ENCODE measurements at regions of chr4 and their contacts with region 1.

Region 1: DNA sequence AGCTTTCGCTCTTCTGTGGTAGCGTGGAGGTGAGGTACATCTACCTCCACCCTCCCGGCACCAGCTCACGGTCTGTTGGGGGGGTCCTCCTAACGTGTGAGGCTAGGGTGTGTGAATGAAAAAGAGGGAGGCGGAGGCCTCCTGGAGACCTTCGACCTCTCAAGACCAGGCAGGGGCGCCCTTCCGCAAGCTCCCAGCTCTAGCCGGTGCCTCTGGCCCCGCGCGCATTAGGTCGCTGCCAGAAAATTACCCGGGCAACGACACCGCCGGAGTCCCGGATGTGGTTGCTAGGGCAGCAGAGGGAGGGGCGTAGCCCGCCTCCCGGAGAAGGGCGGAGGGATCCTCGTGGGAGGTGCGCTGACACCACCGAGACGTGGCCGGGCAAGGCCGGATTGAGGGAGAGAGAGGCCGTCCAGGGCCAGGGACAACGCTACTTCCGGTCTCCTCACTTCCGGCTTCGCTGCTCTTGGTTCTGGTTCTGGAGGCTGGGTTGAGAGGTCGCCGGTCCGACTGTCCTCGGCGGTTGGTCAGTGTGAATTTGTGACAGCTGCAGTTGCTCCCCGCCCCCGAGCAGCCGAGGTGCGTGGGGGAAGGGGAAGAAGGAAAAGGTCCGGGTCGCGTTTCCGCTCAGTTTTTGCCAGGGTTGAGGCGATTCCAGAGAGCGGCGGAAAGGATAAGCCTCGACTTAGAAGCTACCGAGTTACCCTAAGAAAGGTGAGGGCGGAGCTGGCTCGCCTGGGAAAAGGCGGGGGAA is at the starts of genes ARFIP1 and TIGD4:
- DNase-seq: peak; percentile 86 to 97 (median 93)
- ATAC-seq: peak; percentile 94
- H3K4me3 ChIP-seq: peak within 1 kb of the TSS; percentile 97
- H3K4me3 Mint-ChIP-seq: peak within 1 kb of the TSS; percentile 92 to 100 (median 96)
- H3K27ac ChIP-seq: peak within 1 kb of the TSS; percentile 80
- H3K27ac Mint-ChIP-seq: peak within 1 kb of the TSS; percentile 90 to 99 (median 95)
- H3K4me1 ChIP-seq: peaks cover 13 to 16% of the 10 kb centered on the region in 2 donors
- H3K4me1 Mint-ChIP-seq: peaks cover 33 to 60% (median 44%) of the 10 kb centered on the region in 7 donors
- H3K27me3 ChIP-seq: no peaks in the 10 kb centered on the region
- H3K27me3 Mint-ChIP-seq: peaks cover 0 to 29% (median 6%) of the 10 kb centered on the region in 5 donors
- total RNA-seq, gene ARFIP1: 5.1 to 20.2 (median 15.1) TPM
- total RNA-seq, gene TIGD4: 0.15 to 0.19 TPM in 2 of 5 experiments, not detected in the others

Region 2: GRCh38 chr4:151099229-151099975 is 1680.3 kb before region 1 on chr4 and contains the start of gene RPS3A:
- CTCF ChIA-PET with region 1: interaction called, 3 read pairs
- POLR2A ChIA-PET with region 1: no interaction called
- intact Hi-C with region 1: loop called (anchors 1 kb)
- DNase-seq: peak; percentile 95 to 100 (median 99)
- ATAC-seq: peak; percentile 97
- H3K4me3 ChIP-seq: peak within 1 kb of the TSS; percentile 96
- H3K4me3 Mint-ChIP-seq: peak within 1 kb of the TSS; percentile 89 to 99 (median 96)
- H3K27ac ChIP-seq: peak within 1 kb of the TSS; percentile 89
- H3K27ac Mint-ChIP-seq: peak within 1 kb of the TSS; percentile 97 to 99 (median 98)
- H3K4me1 ChIP-seq: peaks cover 14 to 18% of the 10 kb centered on the region in 2 donors
- H3K4me1 Mint-ChIP-seq: peaks cover 24 to 43% (median 28%) of the 10 kb centered on the region in 7 donors
- H3K27me3 ChIP-seq: no peaks in the 10 kb centered on the region
- H3K27me3 Mint-ChIP-seq: peaks cover 0 to 4% (median 0%) of the 10 kb centered on the region in 5 donors
- total RNA-seq, gene RPS3A: 1,723 to 5,358 (median 3,483) TPM

Region 3: GRCh38 chr4:152454398-152455011 is 325.2 kb before region 1 on chr4:
- CTCF ChIA-PET with region 1: no interaction called
- POLR2A ChIA-PET with region 1: no interaction called
- intact Hi-C with region 1: loop called in 1 of 2 experiments (anchors 5 kb)
- DNase-seq: peak in 2 of 9 donors; percentile 6 to 7
- ATAC-seq: no peak
- H3K4me3 ChIP-seq: no peak overlapping the region
- H3K4me3 Mint-ChIP-seq: no peak overlapping the region
- H3K27ac ChIP-seq: no peak overlapping the region
- H3K27ac Mint-ChIP-seq: no peak overlapping the region
- H3K4me1 ChIP-seq: peaks cover 5 to 9% of the 10 kb centered on the region in 2 donors
- H3K4me1 Mint-ChIP-seq: peaks cover 30 to 53% (median 41%) of the 10 kb centered on the region in 7 donors
- H3K27me3 ChIP-seq: no peaks in the 10 kb centered on the region
- H3K27me3 Mint-ChIP-seq: no peaks in the 10 kb centered on the region

Region 4: DNA sequence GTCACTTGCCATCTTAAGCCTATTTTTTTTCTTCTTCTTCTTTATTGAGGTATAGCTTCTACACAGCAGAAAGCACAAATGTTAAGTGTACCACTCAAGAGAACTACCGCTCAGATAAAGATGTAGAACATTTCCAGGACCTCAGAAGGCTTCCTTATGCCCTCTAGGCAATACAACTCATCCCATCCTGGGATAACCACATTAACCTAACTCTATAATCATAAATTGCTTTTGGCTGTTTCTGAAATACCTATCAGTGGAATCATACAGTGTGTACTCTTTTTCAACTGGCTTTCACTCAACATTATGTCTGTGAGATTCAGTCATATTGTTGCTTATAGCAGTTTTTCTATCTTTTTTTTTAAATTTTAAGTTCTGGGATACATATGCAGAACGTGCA is 51.7 kb after region 1 on chr4:
- CTCF ChIA-PET with region 1: no interaction called
- POLR2A ChIA-PET with region 1: no interaction called
- intact Hi-C with region 1: no loop called
- DNase-seq: no peak
- ATAC-seq: no peak
- H3K4me3 ChIP-seq: no peak overlapping the region
- H3K4me3 Mint-ChIP-seq: no peak overlapping the region
- H3K27ac ChIP-seq: no peak overlapping the region
- H3K27ac Mint-ChIP-seq: no peak overlapping the region
- H3K4me1 ChIP-seq: no peaks in the 10 kb centered on the region
- H3K4me1 Mint-ChIP-seq: peaks cover 0 to 6% (median 0%) of the 10 kb centered on the region in 7 donors
- H3K27me3 ChIP-seq: no peaks in the 10 kb centered on the region
- H3K27me3 Mint-ChIP-seq: no peaks in the 10 kb centered on the region

Region 5: DNA sequence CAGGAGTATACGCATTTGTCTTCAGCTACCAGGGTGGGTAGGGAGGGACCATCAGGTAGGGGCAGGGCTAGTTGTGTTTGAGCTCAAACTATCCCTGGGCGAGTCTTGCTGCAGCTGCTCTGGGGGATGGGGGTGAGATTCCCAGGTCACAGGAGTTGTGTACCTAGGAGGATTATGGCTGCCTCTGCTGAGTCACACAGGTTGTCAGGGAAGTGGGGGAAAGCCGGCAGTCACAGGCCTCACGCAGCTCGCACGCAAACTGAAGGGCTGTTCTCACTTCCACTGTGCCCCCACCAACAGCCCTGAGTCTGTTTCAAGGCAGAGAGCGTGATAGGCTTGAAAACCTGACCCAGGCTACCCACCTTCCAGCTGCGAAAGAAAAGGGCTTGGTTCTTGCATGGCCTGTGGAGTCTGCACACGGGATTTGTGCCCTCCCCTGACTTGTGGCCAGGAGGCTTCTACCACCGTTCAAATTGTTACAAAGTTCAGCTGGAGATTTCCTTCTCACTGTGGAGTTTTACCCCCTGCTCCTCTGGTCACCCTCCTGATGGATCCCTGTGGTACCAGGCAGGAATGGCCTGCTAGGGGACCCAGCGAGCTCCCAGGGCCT is 63.9 kb after region 1 on chr4:
- CTCF ChIA-PET with region 1: no interaction called
- POLR2A ChIA-PET with region 1: no interaction called
- intact Hi-C with region 1: loop called (anchors 1 kb)
- DNase-seq: no peak
- ATAC-seq: no peak
- H3K4me3 ChIP-seq: no peak overlapping the region
- H3K4me3 Mint-ChIP-seq: no peak overlapping the region
- H3K27ac ChIP-seq: no peak overlapping the region
- H3K27ac Mint-ChIP-seq: no peak overlapping the region
- H3K4me1 ChIP-seq: peaks cover 0 to 4% of the 10 kb centered on the region in 2 donors
- H3K4me1 Mint-ChIP-seq: peaks cover 13 to 25% (median 20%) of the 10 kb centered on the region in 7 donors
- H3K27me3 ChIP-seq: no peaks in the 10 kb centered on the region
- H3K27me3 Mint-ChIP-seq: no peaks in the 10 kb centered on the region

Region 6: DNA sequence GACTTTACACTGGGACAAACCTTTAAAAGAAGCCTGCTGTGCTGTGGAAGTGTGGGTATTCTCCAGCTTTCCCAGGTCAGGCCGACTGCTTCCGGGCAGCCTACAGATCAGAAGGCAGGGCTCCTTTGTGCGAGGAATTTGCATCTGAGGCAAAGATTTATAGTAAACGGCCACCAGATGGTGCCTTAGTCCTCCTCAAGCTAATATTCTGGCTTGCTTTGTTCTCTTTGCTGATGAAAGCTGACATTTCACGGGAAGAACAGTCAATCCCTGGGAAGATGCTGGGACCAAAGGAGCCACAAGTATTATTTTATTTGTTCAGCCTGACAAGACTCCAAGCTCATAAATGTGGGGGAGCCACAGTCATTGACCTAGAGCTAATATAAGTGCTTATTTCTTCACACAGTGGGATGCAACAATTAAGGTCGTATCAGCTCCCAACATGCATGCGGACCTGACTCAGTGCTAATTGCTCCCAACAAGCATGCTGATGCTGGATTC is 303.8 kb after region 1 on chr4:
- CTCF ChIA-PET with region 1: interaction called, 3 read pairs
- POLR2A ChIA-PET with region 1: no interaction called
- intact Hi-C with region 1: loop called (anchors 1 to 2 kb)
- DNase-seq: peak in 7 of 9 donors; percentile 44 to 66 (median 57)
- ATAC-seq: peak; percentile 61
- H3K4me3 ChIP-seq: no peak overlapping the region
- H3K4me3 Mint-ChIP-seq: peak overlapping the region in 3 of 10 donors; percentile 16 to 71 (median 36)
- H3K27ac ChIP-seq: no peak overlapping the region
- H3K27ac Mint-ChIP-seq: peak overlapping the region in 6 of 9 donors; percentile 45 to 83 (median 60)
- H3K4me1 ChIP-seq: peaks cover 5 to 33% of the 10 kb centered on the region in 2 donors
- H3K4me1 Mint-ChIP-seq: peaks cover 19 to 59% (median 49%) of the 10 kb centered on the region in 7 donors
- H3K27me3 ChIP-seq: no peaks in the 10 kb centered on the region
- H3K27me3 Mint-ChIP-seq: peaks cover 0 to 32% (median 0%) of the 10 kb centered on the region in 5 donors

Region 7: GRCh38 chr4:153221783-153222706 is 442.4 kb after region 1 on chr4:
- CTCF ChIA-PET with region 1: no interaction called
- POLR2A ChIA-PET with region 1: no interaction called
- intact Hi-C with region 1: loop called in 1 of 2 experiments (anchors 10 kb)
- DNase-seq: peak in 8 of 9 donors; percentile 19 to 42 (median 31)
- ATAC-seq: peak; percentile 65
- H3K4me3 ChIP-seq: peak overlapping the region; percentile 62
- H3K4me3 Mint-ChIP-seq: peak overlapping the region; percentile 86 to 96 (median 92)
- H3K27ac ChIP-seq: peak overlapping the region; percentile 60
- H3K27ac Mint-ChIP-seq: peak overlapping the region in 8 of 9 donors; percentile 42 to 88 (median 76)
- H3K4me1 ChIP-seq: peaks cover 0 to 24% of the 10 kb centered on the region in 2 donors
- H3K4me1 Mint-ChIP-seq: peaks cover 23 to 48% (median 42%) of the 10 kb centered on the region in 7 donors
- H3K27me3 ChIP-seq: no peaks in the 10 kb centered on the region
- H3K27me3 Mint-ChIP-seq: peaks cover 0 to 66% (median 3%) of the 10 kb centered on the region in 5 donors

Region 8: DNA sequence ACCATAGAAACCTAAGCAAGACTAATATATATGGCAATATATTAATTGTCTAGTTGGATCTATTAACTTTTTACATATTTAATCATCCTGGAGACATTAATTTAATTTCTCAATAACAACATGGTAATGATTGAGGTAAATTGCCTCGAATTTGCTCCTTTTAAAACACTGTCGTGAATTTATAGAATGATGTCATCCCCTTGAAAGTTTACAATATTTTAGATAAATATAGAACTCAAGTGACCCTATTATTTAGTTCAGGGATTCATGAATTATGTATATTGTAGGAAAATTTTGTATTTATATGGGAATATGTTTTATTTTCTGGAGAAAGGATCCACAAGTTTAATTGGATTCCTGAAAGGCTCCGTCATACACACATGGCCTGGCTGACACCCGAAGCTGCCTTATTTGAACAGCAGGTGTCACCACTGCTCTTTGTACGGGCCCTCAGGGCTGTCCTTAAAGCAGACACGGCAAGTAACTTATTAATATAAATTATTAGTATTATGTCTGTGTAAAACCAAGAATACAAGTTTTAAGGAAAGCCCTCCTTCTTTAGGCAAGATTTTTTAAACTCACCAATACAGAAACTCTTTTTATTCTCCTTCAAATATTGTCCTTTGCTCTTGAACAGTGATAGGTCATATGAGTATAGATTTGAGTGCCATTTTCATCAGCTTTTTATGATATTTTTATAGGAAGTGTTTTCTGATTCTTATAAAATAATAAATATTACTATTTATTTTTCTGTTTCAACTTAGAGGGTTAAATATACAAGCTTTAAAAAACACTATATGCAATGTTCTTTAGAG is 1772.4 kb after region 1 on chr4:
- CTCF ChIA-PET with region 1: no interaction called
- POLR2A ChIA-PET with region 1: no interaction called
- intact Hi-C with region 1: loop called in 1 of 2 experiments (anchors 2 kb)
- DNase-seq: peak; percentile 25 to 70 (median 61)
- ATAC-seq: peak; percentile 61
- H3K4me3 ChIP-seq: no peak overlapping the region
- H3K4me3 Mint-ChIP-seq: peak overlapping the region in 2 of 10 donors; percentile 12 to 17
- H3K27ac ChIP-seq: no peak overlapping the region
- H3K27ac Mint-ChIP-seq: peak overlapping the region in 3 of 9 donors; percentile 41 to 67 (median 43)
- H3K4me1 ChIP-seq: peaks cover 6 to 18% of the 10 kb centered on the region in 2 donors
- H3K4me1 Mint-ChIP-seq: peaks cover 13 to 36% (median 31%) of the 10 kb centered on the region in 7 donors
- H3K27me3 ChIP-seq: no peaks in the 10 kb centered on the region
- H3K27me3 Mint-ChIP-seq: peaks cover 0 to 5% (median 0%) of the 10 kb centered on the region in 5 donors